Head of caudate nucleus (tissue), 42 donors: ENCODE measurements at regions of chr13 and their contacts with region 1.

Region 1: GRCh38 chr13:106028911-106029310 is 506.6 kb downstream of the EFNB2 start:
- DNase-seq: no peak

Region 2: DNA sequence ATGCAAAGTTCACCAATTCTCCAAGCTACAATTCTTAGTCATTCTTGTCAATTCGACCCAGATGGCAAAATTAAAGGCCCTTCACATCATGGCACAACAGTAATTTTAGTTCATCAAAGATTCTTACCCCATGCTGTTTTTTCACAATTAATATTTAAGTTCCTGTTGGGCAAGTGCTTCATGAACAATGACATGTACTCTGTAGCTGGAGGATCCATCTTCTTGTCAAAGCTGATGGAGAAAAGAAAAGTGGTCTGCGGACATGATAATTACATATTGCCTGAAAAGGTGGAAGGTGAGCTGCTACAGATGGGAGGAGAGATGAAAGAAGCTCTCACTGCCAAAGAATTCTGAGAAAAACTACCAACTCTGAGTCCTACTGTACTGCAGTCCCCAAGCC is 1592.4 kb before region 1 on chr13:
- intact Hi-C with region 1: loop called (anchors 10 kb)
- DNase-seq: no peak

Region 3: GRCh38 chr13:105692769-105693168 is 336.1 kb before region 1 on chr13:
- intact Hi-C with region 1: no loop called
- DNase-seq: no peak

Region 4: DNA sequence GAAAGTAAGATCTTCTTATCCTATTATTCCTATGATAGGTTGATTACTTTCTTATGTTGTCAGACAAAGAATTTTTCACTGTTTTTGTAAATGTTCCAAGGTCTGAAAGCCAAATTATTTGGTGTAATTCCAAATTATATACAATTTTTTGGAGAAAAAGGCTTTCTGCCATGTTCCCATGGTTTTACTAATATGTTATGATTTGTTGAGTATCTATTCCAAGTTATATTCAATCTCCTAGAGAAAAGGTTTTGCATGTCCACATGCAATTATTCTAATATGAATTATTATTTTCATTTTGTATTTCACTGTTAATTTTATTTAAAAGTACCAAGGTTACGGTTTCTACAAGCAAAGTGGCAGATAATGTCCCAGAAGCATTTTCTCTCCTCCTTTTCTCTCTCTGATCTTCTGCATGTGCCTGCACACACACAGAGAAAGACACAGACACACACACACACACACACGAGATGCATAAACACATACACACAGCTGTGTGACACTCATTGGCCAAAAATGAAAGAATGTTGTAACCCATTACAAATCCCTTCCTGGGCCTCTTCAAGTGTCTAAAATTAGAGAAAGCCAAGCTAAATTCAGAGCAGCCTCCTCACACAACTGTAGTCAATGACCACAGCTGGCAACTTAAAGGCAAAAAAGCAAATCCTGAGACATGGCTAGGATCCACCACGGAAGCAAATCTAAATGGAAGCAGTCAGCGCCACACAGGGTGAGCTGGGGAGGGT is 114.4 kb before region 1 on chr13:
- intact Hi-C with region 1: no loop called
- DNase-seq: no peak